ENCODE measurements at regions of chr19 and their contacts with region 1.

Region 1: GRCh38 chr19:48637170-48637947 is at the start of gene DBP:
- DNase-seq: peak; percentile 100
- H3K4me3 Mint-ChIP-seq: peak within 1 kb of the TSS; percentile 85
- H3K27ac Mint-ChIP-seq: peak within 1 kb of the TSS; percentile 92
- H3K4me1 Mint-ChIP-seq: peaks cover 47% of the 10 kb centered on the region
- H3K27me3 Mint-ChIP-seq: no peaks in the 10 kb centered on the region
- total RNA-seq, gene DBP: 18.7 to 19.1 TPM

Region 2: GRCh38 chr19:48618916-48619691 is 18.3 kb before region 1 on chr19 and contains the starts of genes RPL18 and SPHK2:
- CTCF ChIA-PET with region 1: interaction called, 11 read pairs
- POLR2A ChIA-PET with region 1: interaction called, 47 read pairs
- DNase-seq: peak; percentile 97
- H3K4me3 Mint-ChIP-seq: peak within 1 kb of the TSS; percentile 96
- H3K27ac Mint-ChIP-seq: peak within 1 kb of the TSS; percentile 97
- H3K4me1 Mint-ChIP-seq: peaks cover 58% of the 10 kb centered on the region
- H3K27me3 Mint-ChIP-seq: no peaks in the 10 kb centered on the region
- total RNA-seq, gene RPL18: 1,511 to 1,528 TPM
- total RNA-seq, gene SPHK2: 27.7 to 29.5 TPM

Region 3: DNA sequence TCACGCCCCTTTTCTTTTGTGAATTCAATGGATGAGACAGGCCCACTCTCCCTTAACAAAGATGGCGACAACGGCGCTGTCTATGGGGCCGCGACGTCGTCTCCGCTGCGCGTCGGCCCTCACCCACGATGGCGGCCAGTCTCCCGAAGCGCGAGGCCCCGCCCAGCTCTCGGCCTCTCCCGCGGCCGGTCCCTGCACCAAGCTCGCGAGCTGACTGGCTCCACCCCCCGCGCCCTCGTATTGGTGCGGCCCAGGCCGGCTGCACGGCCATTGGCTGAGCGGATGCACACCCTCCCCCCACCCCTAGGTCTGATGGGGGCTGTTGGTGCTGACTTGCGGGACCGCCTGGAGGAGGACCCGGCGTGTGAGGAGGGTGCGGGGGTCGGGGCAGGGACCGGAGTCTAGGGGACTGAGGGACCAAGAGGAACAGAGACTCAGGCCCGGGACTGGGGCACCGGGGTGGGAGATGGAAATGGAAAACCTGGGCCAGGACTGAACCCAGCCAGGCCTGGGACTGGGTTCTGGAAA is 13.2 kb before region 1 on chr19:
- CTCF ChIA-PET with region 1: interaction called, 11 read pairs
- POLR2A ChIA-PET with region 1: interaction called, 47 read pairs
- DNase-seq: peak; percentile 98
- H3K4me3 Mint-ChIP-seq: peak overlapping the region; percentile 71
- H3K27ac Mint-ChIP-seq: peak overlapping the region; percentile 86
- H3K4me1 Mint-ChIP-seq: peaks cover 53% of the 10 kb centered on the region
- H3K27me3 Mint-ChIP-seq: no peaks in the 10 kb centered on the region

Region 4: DNA sequence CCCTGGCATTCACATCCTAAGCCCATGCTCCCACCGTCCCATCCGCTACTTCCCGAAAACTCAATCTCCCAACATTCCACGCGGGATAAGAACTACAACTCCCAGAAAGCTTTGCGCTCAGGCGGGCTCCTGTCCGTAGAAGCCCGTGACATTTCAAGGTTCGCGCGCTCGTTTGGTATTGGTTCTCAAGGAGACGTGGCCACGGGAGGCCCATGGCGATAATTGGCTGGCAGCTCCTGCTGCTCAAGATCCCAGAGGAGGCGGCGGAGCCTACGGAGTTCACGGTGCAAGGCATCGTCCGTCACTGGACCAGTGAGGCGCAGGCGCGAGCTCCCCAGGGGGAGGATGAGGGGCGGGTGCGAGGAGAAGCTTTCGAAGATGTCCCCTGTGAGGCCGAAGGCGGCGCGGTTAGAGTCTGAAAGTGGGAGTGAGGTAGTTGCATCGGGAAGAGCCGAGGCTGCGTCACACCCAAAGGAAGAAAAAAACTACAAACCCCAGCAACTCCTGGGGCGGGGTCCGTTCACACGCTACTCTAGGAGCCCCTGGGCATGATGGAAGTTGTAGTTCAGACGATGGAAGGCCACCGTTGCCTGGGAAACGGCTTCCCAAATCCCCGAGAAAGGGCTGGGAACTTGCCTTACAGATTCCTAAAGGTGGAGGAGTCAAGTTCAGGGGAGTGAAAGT is 83.4 kb after region 1 on chr19:
- CTCF ChIA-PET with region 1: no interaction called
- POLR2A ChIA-PET with region 1: no interaction called
- DNase-seq: peak; percentile 96
- H3K4me3 Mint-ChIP-seq: peak overlapping the region; percentile 87
- H3K27ac Mint-ChIP-seq: peak overlapping the region; percentile 95
- H3K4me1 Mint-ChIP-seq: peaks cover 30% of the 10 kb centered on the region
- H3K27me3 Mint-ChIP-seq: no peaks in the 10 kb centered on the region